HEK293 (cell line): ENCODE measurements at regions of chr19 and their contacts with region 1.

Region 1: DNA sequence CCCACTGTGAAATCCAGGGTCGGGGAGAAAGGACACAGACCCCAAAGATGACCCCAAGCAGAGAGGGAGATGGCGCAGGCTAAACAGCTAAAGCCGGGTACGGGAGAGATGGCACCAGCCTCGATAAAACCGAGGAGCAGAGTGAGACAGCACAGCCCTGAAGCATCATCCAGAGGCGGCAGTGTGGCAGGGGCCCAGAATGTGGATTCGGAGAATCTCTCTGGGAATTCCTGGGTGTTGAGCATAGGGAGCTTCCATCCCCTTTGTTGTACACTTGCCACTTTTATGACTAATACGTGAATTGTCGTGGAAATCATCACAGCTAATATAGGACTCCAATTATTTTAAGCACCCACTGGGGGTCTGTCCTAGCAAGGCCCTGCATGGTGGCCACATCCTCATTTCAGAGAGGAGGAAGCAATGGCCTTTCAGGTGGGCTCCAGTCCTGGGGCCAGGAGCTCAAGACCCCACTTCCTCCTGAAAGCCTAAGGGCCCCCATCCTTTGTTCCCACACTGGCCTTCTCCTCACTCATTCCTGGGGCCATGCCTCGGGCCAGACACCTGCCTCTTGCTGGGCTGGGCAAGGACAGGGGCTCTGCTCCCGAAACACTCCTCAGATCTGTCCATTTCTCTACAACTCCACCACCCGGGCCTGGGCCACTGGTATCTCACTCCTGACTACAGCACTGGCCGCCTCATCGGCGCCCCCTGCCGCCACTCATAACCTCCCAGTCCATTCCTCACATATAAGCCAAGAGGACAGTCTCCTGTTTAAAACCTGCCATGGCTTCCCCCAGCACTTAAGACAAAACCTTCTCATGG is 29.3 kb upstream of the ATP1A3 start:
- H3K4me3 ChIP-seq: no peak overlapping the region
- H3K27ac ChIP-seq: no peak overlapping the region
- H3K4me1 ChIP-seq: no peaks in the 10 kb centered on the region
- CTCF ChIP-seq: peak; percentile 84

Region 2: GRCh38 chr19:41998246-41999020 is 24.9 kb before region 1 on chr19:
- CTCF ChIA-PET with region 1: interaction called, 23 read pairs
- POLR2A ChIA-PET with region 1: interaction called, 3 read pairs
- H3K4me3 ChIP-seq: no peak overlapping the region; the same call in 1 of the 2 replicates
- H3K27ac ChIP-seq: no peak overlapping the region
- H3K4me1 ChIP-seq: peaks cover 6% of the 10 kb centered on the region
- CTCF ChIP-seq: peak; percentile 90

Region 3: GRCh38 chr19:42010245-42011126 is 12.8 kb before region 1 on chr19:
- CTCF ChIA-PET with region 1: interaction called, 78 read pairs
- POLR2A ChIA-PET with region 1: no interaction called
- H3K4me3 ChIP-seq: no peak overlapping the region
- H3K27ac ChIP-seq: peak overlapping the region; percentile 52
- H3K4me1 ChIP-seq: peaks cover 3% of the 10 kb centered on the region; the same call in 1 of the 2 replicates
- CTCF ChIP-seq: no peak

Region 4: DNA sequence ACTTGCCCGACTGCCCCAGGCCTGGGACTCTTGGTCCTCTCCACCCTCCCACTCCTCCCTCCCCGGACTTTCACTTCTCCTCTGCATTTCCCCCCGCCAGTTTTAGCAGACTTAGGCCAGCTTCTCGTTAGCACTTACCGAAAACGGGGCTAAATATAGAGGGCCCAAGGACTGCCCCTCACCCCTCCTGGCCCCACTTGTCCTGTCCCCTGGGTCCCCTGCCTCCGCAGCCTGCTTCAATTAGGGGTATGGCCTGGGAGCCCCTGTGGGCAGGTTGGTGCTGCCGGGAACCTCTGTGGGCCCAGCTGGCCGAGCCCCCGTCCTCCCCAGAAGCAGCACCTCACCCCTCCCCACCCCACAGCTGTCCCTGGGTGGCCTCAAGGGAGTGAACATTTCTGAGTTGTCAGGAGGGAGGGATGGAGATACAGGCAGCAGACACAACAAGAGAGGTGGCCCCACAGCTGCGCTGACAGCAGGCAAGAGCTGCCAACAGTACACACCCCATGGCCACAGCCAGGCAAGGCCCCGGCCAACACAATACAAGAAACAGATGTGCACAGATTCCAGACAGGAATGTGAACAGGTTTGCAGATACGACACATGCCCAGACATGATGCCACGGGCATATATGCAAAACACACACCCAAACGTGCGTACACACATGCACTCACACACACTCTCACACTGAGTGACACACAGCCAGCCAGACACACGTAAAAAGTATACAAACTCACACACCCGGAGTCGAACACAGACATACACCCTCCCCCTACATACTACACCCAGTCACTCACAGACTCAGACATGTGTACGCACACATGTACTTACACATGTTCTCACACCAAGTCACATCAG is 106.3 kb after region 1 on chr19:
- CTCF ChIA-PET with region 1: no interaction called
- POLR2A ChIA-PET with region 1: no interaction called
- H3K4me3 ChIP-seq: no peak overlapping the region
- H3K27ac ChIP-seq: no peak overlapping the region
- H3K4me1 ChIP-seq: no peaks in the 10 kb centered on the region
- CTCF ChIP-seq: no peak